GM12878 (cell line): ENCODE measurements at regions of chr19 and their contacts with region 1.

Region 1: GRCh38 chr19:42440357-42441048 is 2.2 kb downstream of the CXCL17 start:
- DNase-seq: no peak
- ATAC-seq: peak; percentile 92
- H3K4me3 ChIP-seq: no peak overlapping the region
- H3K27ac ChIP-seq: no peak overlapping the region
- H3K4me1 ChIP-seq: no peaks in the 10 kb centered on the region
- H3K27me3 ChIP-seq: no peaks in the 10 kb centered on the region
- CTCF ChIP-seq: peak; percentile 79 to 95 (median 95)
- EP300 ChIP-seq: no peak
- POLR2A ChIP-seq: no peak
- RAD21 ChIP-seq: 0 out of 2 replicates have a peak, but pooled peaks have one; percentile 24

Region 2: GRCh38 chr19:42270346-42271044 is 170.0 kb before region 1 on chr19:
- CTCF ChIA-PET with region 1: no interaction called
- POLR2A ChIA-PET with region 1: no interaction called
- RAD21 ChIA-PET with region 1: no interaction called
- SMC1A ChIA-PET with region 1: no interaction called
- in situ Hi-C with region 1: no loop called
- intact Hi-C with region 1: no loop called
- DNase-seq: no peak
- ATAC-seq: peak; percentile 12
- H3K4me3 ChIP-seq: peak overlapping the region; percentile 91
- H3K27ac ChIP-seq: peak overlapping the region; percentile 94
- H3K4me1 ChIP-seq: peaks cover 25% of the 10 kb centered on the region
- H3K27me3 ChIP-seq: no peaks in the 10 kb centered on the region
- CTCF ChIP-seq: no peak
- EP300 ChIP-seq: no peak; a peak in 1 of 4 replicates
- POLR2A ChIP-seq: peak; percentile 78
- RAD21 ChIP-seq: no peak

Region 3: GRCh38 chr19:42401365-42402303 is 38.9 kb before region 1 on chr19:
- CTCF ChIA-PET with region 1: interaction called, 11 read pairs
- POLR2A ChIA-PET with region 1: no interaction called
- RAD21 ChIA-PET with region 1: interaction called, 4 read pairs
- SMC1A ChIA-PET with region 1: interaction called, 4 read pairs
- in situ Hi-C with region 1: no loop called
- intact Hi-C with region 1: no loop called
- DNase-seq: no peak
- ATAC-seq: peak; percentile 69
- H3K4me3 ChIP-seq: peak overlapping the region; percentile 60
- H3K27ac ChIP-seq: no peak overlapping the region
- H3K4me1 ChIP-seq: peaks cover 5% of the 10 kb centered on the region
- H3K27me3 ChIP-seq: no peaks in the 10 kb centered on the region
- CTCF ChIP-seq: peak; percentile 73 to 76 (median 74)
- EP300 ChIP-seq: no peak
- POLR2A ChIP-seq: peak; percentile 72
- RAD21 ChIP-seq: peak; percentile 47

Region 4: GRCh38 chr19:42455621-42456081 is 15.1 kb after region 1 on chr19:
- CTCF ChIA-PET with region 1: interaction called, 63 read pairs
- POLR2A ChIA-PET with region 1: interaction called, 3 read pairs
- RAD21 ChIA-PET with region 1: interaction called, 32 read pairs
- SMC1A ChIA-PET with region 1: interaction called, 33 read pairs
- in situ Hi-C with region 1: no loop called
- intact Hi-C with region 1: no loop called
- DNase-seq: no peak
- ATAC-seq: no peak
- H3K4me3 ChIP-seq: no peak overlapping the region
- H3K27ac ChIP-seq: no peak overlapping the region
- H3K4me1 ChIP-seq: no peaks in the 10 kb centered on the region
- H3K27me3 ChIP-seq: no peaks in the 10 kb centered on the region
- CTCF ChIP-seq: no peak
- EP300 ChIP-seq: no peak
- POLR2A ChIP-seq: no peak
- RAD21 ChIP-seq: no peak

Region 5: DNA sequence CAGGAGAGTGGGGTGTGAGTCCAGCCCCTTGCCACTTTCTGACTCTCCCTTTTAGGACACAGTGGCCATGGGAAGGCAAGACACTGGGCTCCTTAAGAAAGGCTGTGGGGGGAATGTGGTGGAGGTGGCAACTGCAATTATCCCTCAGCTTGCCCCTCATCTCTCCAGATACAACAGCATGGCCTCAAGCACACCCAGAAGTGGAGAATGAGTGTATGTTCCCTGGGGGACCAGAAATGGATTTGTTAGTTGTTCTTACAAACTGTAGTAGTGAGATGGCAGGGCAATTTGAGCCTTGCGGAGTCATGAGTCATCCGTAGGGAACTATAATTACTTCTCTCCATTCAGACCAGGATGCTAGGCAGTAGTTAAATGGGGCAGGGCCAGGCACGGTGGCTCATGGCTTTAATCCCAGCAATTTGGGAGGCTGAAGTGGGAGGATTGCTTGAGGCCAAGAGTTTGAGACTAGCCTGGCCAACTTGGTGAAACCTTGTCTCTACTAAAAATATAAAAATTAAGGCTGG is 27.8 kb after region 1 on chr19:
- CTCF ChIA-PET with region 1: interaction called, 14 read pairs
- POLR2A ChIA-PET with region 1: interaction called, 4 read pairs
- RAD21 ChIA-PET with region 1: interaction called, 7 read pairs
- SMC1A ChIA-PET with region 1: interaction called, 4 read pairs
- in situ Hi-C with region 1: no loop called
- intact Hi-C with region 1: no loop called
- DNase-seq: no peak
- ATAC-seq: no peak
- H3K4me3 ChIP-seq: no peak overlapping the region
- H3K27ac ChIP-seq: no peak overlapping the region
- H3K4me1 ChIP-seq: peaks cover 30% of the 10 kb centered on the region
- H3K27me3 ChIP-seq: no peaks in the 10 kb centered on the region
- CTCF ChIP-seq: no peak
- EP300 ChIP-seq: no peak
- POLR2A ChIP-seq: no peak
- RAD21 ChIP-seq: no peak

Region 6: GRCh38 chr19:42512743-42513304 is 72.3 kb after region 1 on chr19:
- CTCF ChIA-PET with region 1: interaction called, 13 read pairs
- POLR2A ChIA-PET with region 1: no interaction called
- RAD21 ChIA-PET with region 1: no interaction called
- SMC1A ChIA-PET with region 1: interaction called, 3 read pairs
- in situ Hi-C with region 1: no loop called
- intact Hi-C with region 1: no loop called
- DNase-seq: peak; percentile 71
- ATAC-seq: peak; percentile 96
- H3K4me3 ChIP-seq: no peak overlapping the region
- H3K27ac ChIP-seq: peak overlapping the region; percentile 71
- H3K4me1 ChIP-seq: peaks cover 52% of the 10 kb centered on the region
- H3K27me3 ChIP-seq: no peaks in the 10 kb centered on the region
- CTCF ChIP-seq: 0 out of 6 replicates have a peak, but pooled peaks of 1 of the 3 experiments have one; percentile 11
- EP300 ChIP-seq: peak; percentile 26 to 68
- POLR2A ChIP-seq: no peak
- RAD21 ChIP-seq: no peak

Region 7: GRCh38 chr19:42534391-42534790 is 93.9 kb after region 1 on chr19:
- CTCF ChIA-PET with region 1: interaction called, 82 read pairs
- POLR2A ChIA-PET with region 1: interaction called, 3 read pairs
- RAD21 ChIA-PET with region 1: interaction called, 23 read pairs
- SMC1A ChIA-PET with region 1: interaction called, 23 read pairs
- in situ Hi-C with region 1: no loop called
- intact Hi-C with region 1: no loop called
- DNase-seq: no peak
- ATAC-seq: no peak
- H3K4me3 ChIP-seq: no peak overlapping the region
- H3K27ac ChIP-seq: no peak overlapping the region
- H3K4me1 ChIP-seq: no peaks in the 10 kb centered on the region; the same call in 1 of the 2 replicates
- H3K27me3 ChIP-seq: no peaks in the 10 kb centered on the region
- CTCF ChIP-seq: no peak
- EP300 ChIP-seq: no peak
- POLR2A ChIP-seq: no peak
- RAD21 ChIP-seq: no peak

Region 8: DNA sequence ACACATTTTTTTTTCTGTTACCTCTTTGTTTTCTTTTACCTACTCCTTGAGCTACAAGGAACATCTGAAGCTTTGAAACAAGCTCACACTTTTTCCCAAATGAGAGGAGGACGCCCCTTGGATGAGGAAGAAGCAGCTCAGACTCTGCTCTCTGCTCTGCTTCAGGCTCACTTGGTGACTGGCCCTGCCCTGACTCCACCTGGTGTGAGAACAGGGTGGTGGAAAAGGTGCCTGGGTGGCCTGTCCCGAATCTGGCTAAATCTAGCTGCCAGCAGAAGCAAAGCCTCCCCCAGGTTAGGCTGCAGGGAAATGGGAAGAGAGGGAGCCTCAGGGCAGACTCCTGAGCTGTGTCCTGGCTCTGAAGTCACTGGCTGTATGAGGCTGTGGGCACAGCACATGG is 222.2 kb after region 1 on chr19:
- CTCF ChIA-PET with region 1: no interaction called
- POLR2A ChIA-PET with region 1: no interaction called
- RAD21 ChIA-PET with region 1: no interaction called
- SMC1A ChIA-PET with region 1: no interaction called
- in situ Hi-C with region 1: no loop called
- intact Hi-C with region 1: no loop called
- DNase-seq: no peak
- ATAC-seq: no peak
- H3K4me3 ChIP-seq: no peak overlapping the region
- H3K27ac ChIP-seq: no peak overlapping the region
- H3K4me1 ChIP-seq: no peaks in the 10 kb centered on the region
- H3K27me3 ChIP-seq: no peaks in the 10 kb centered on the region
- CTCF ChIP-seq: no peak
- EP300 ChIP-seq: no peak
- POLR2A ChIP-seq: no peak
- RAD21 ChIP-seq: no peak